Activated T-helper 1 cell treated with anti-CD3 and anti-CD28 coated beads, Interleukin-12 subunit alpha, Interleukin-12 subunit beta, Interleukin-2, Interleukin-4 antibody, amounts not matched to agents 30 ng/mL and 10 ng/mL and 1 ng/mL, durations not matched to agents 14 hours and 24 hours and 36 hours (primary cell): ENCODE measurements at regions of chr11 and their contacts with region 1.

Region 1: DNA sequence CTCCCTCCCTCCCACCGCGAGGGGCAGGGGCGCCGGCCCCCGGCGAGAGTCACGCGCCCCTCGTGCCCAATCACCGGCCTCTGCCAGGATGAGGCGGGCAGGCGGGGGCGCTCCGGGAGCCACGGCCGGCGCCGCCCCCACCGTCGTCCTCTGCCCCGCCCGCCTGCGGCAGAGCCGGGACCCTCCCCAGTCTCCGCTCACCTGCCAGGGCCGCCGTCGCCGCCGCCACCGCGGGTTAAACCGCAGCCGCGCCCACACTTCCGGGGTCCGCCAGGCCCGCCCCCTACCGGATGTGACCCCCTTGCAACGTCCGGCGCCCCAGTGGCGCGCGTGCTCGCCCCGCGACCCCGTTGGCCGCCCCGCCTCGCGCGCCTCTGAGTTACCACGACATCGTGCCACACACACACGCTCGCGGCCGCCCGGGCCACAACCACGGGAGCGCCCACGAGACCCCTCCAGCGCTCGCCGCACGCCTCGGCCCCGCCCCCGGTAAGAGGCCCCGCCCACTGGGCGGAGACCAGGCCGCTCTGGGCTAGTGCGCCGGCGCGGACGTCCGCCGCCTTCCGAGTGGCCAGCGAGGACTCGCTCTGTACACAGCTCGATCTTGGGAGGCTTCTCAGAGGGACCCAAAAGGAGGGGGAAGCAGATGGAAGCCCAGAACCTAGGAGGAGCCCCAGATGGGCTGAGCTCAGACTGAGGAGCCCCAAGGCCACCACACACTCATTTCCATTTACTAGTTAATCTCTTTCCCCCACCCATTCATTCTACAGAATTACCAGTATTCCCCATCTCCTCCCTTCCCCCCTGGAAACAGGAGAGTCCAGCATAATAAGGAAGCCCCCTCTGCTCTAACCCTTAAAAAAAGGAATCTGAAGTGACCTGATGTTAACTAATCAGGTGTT is at the start of gene VPS37C:
- DNase-seq: peak; percentile 89
- H3K4me3 Mint-ChIP-seq: peak within 1 kb of the TSS; percentile 89
- H3K27ac Mint-ChIP-seq: peak within 1 kb of the TSS; percentile 91
- H3K4me1 Mint-ChIP-seq: peaks cover 60% of the 10 kb centered on the region
- H3K27me3 Mint-ChIP-seq: no peaks in the 10 kb centered on the region
- total RNA-seq, gene VPS37C: 11.5 and 11.6 TPM in 2 replicates

Region 2: DNA sequence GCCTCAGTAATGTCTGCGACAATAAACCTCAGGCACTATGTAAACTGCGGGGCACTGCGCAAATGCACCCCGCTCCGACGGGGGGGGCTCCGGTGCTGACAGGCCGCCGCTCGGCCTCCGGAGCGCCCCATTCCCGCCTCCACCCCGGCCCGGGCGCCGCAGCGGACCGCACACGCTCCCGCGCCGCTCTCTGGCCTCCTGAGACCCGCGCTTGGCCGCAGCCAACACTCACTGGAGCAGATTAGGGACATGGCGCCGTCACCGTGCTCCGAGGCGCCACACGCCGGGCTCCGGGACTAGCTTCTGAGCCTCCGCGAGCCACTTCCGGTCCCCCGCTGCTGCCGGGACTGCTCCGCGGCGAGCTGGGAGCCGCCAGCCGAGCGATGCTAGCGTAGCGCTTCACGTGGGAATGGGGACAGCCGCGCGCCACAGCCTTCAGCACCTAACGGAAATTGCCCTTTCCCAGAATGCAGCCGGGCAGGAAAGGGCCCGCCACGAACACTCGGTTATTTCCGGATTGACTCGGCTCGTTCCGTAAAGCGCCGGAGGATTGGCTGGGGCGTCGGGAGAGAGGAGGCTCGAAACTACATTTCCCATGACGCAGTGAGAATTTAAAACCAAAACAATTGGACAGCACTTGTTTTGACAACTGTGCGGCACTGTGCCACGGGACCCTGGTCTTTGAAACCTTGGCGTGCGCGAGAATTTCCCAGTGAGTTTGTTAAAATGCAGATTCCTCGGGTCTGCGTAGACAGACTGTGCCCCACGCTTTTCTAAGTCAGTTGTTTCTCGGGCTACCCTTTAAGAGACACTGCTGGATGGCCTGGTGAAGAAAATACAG is 255.1 kb before region 1 on chr11 and contains the start of gene PRPF19:
- intact Hi-C with region 1: loop called (anchors 1 kb)
- DNase-seq: peak; percentile 99
- H3K4me3 Mint-ChIP-seq: peak within 1 kb of the TSS; percentile 90
- H3K27ac Mint-ChIP-seq: peak within 1 kb of the TSS; percentile 90
- H3K4me1 Mint-ChIP-seq: peaks cover 38% of the 10 kb centered on the region
- H3K27me3 Mint-ChIP-seq: peaks cover 15% of the 10 kb centered on the region
- total RNA-seq, gene PRPF19: 221 and 222 TPM in 2 replicates

Region 3: DNA sequence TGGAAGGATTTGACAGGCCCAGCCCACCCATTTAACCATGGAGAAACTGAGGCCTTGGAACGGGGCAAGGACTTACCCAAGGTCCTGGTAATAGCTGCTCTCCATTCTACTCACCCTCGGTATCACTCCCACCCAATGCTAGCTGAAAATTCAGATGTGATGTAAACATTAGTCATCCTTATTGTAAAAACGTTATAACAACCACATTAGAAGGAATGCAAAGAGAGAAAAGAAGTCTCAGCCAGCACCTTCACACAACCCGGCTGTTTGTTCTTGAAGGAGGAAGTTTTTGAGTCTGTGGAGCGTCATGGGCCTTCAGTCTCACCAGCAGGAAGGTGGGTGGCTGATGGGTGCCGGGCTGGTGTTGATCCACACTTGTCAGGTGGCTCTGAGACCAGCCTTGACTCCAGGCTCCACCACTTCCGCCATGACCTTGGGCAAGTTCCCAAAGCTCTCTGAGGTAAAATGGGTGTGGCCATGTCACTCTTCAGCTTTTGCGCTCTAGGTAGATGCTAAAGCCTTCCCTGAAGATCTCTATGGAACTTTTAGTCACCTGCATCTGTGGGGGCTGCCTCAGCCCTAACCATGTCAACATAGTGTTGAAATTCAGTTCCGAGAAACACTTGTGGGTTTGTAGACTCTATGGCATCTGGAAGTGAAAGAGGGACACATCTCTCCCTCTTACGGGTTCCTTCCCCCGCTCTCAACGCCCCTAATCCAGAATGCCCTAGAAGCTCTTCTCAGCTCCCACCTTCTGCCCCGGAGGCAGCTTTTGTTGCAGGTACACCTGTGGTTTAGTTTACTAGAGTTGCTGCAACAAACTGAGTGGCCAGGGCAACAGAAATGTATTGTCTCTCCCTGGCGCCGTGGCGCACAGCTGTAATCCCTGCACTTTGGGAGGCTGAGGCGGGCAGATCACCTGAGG is 175.2 kb before region 1 on chr11:
- intact Hi-C with region 1: loop called (anchors 1 kb)
- DNase-seq: peak; percentile 81
- H3K4me3 Mint-ChIP-seq: peak overlapping the region; percentile 80
- H3K27ac Mint-ChIP-seq: peak overlapping the region; percentile 92
- H3K4me1 Mint-ChIP-seq: peaks cover 94% of the 10 kb centered on the region
- H3K27me3 Mint-ChIP-seq: no peaks in the 10 kb centered on the region

Region 4: DNA sequence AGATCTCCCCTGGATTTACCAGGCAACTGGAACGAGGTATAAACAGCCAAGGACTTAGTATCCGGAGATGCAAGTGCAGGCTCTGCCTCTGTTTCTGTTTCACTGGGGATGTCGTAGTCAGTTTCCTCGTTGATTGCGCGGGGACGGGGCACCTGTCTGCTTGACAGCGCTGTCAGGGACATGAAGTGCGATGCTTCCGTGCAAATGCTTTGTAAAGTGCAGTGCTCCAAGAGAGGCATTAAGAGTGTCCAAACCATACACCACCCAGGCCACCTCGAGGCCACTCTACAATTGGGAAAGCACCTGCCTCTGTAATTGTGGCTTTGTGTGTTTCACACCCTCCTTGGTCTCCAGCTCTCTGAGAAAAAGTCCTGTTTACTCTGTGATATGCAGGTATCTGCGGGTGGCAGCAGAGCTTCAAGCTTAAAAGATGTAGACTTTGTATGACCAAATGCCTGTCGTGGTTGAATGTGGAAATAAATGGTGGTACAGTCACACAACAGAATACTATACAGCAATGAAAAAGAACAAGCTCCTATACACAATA is 77.8 kb before region 1 on chr11:
- intact Hi-C with region 1: loop called (anchors 2 kb)
- DNase-seq: peak; percentile 75
- H3K4me3 Mint-ChIP-seq: peak overlapping the region; percentile 88
- H3K27ac Mint-ChIP-seq: peak overlapping the region; percentile 99
- H3K4me1 Mint-ChIP-seq: peaks cover 67% of the 10 kb centered on the region
- H3K27me3 Mint-ChIP-seq: no peaks in the 10 kb centered on the region

Region 5: GRCh38 chr11:61120706-61121191 is 40.7 kb before region 1 on chr11:
- intact Hi-C with region 1: no loop called
- DNase-seq: no peak
- H3K4me3 Mint-ChIP-seq: peak overlapping the region; percentile 17
- H3K27ac Mint-ChIP-seq: peak overlapping the region; percentile 57
- H3K4me1 Mint-ChIP-seq: peaks cover 54% of the 10 kb centered on the region
- H3K27me3 Mint-ChIP-seq: no peaks in the 10 kb centered on the region

Region 6: DNA sequence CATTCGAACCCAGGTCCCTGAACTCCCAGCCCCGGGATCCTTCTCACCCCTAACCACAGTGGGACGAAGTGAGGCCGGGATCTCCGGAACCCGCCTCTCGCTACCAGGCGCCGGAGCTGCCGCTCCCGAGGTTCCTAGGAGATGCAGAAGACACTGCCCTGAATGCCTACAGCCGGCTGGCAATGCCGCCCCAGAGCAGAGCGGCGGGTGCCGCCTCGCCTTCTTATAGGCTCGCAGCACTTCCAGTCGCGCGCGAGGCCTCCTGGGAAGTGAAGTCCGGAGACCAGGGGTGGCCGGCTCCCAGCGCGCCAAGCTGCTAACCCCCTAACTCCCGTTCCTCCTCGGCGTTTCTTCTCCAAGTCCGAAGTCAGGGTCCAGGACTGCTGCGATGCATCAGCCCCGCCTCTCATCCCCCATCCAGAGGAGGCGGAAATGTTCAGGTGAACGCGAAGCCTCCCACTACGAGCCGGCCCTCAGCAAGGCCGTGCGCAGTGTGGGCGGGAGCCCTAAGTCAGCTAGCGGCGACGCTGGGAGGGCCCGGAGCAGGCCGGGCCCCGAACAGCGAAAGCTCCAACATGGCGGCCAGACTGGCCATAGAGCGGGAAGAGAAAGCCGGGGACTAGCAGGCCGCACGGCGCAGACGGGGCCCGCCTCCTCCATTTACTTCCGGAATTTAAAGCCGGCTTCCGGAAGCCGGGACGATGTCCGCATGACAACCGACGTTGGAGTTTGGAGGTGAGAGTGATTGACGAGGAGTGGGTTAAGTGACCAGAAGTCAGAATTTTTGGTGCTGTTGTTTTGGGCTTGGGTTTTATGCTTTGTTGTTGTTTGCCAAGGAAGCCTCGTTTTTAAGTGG is 200.5 kb after region 1 on chr11 and contains the starts of genes CYB561A3 and TMEM138:
- intact Hi-C with region 1: loop called (anchors 10 kb)
- DNase-seq: peak; percentile 90
- H3K4me3 Mint-ChIP-seq: peak within 1 kb of the TSS; percentile 98
- H3K27ac Mint-ChIP-seq: peak within 1 kb of the TSS; percentile 95
- H3K4me1 Mint-ChIP-seq: peaks cover 45% of the 10 kb centered on the region
- H3K27me3 Mint-ChIP-seq: no peaks in the 10 kb centered on the region
- total RNA-seq, gene CYB561A3: 38.1 and 42.3 TPM in 2 replicates
- total RNA-seq, gene TMEM138: 68.4 and 71.7 TPM in 2 replicates